ENCODE measurements at regions of chr9 and their contacts with region 1.

Region 1: GRCh38 chr9:89886281-89886700 is 281.5 kb downstream of the GADD45G start:
- DNase-seq: no peak
- ATAC-seq: peak; percentile 33 to 63 (median 59)
- H3K4me3 ChIP-seq: no peak overlapping the region
- H3K27ac ChIP-seq: peak overlapping the region; percentile 74
- H3K4me1 ChIP-seq: peaks cover 45% of the 10 kb centered on the region
- H3K27me3 ChIP-seq: no peaks in the 10 kb centered on the region
- CTCF ChIP-seq: no peak

Region 2: GRCh38 chr9:89919169-89919681 is 32.9 kb after region 1 on chr9:
- intact Hi-C with region 1: no loop called
- DNase-seq: no peak
- ATAC-seq: peak; percentile 83 to 97 (median 90)
- H3K4me3 ChIP-seq: no peak overlapping the region
- H3K27ac ChIP-seq: no peak overlapping the region
- H3K4me1 ChIP-seq: no peaks in the 10 kb centered on the region
- H3K27me3 ChIP-seq: no peaks in the 10 kb centered on the region
- CTCF ChIP-seq: peak; percentile 39

Region 3: DNA sequence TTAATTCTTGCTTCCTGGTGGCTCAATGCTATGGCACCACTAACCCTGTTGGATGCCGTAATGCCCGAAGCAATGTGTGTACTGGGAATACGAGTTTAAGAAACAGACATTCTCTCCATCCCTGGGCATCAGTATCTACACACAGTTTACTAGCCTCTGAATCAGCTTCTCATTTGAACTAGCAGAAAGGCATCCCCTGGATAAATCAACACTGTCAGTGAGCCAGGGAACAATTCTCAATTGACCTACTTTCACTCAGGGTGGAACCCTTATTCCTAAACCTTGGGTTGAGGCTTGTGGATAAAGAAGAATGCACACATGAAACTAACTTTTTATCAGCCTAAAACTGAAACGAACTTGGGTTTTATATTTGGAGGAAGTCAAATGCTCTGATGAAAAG is 49.5 kb after region 1 on chr9:
- intact Hi-C with region 1: loop called in 1 of 2 experiments (anchors 5 kb)
- DNase-seq: no peak
- ATAC-seq: no peak
- H3K4me3 ChIP-seq: no peak overlapping the region
- H3K27ac ChIP-seq: no peak overlapping the region
- H3K4me1 ChIP-seq: no peaks in the 10 kb centered on the region
- H3K27me3 ChIP-seq: no peaks in the 10 kb centered on the region
- CTCF ChIP-seq: no peak

Region 4: GRCh38 chr9:89999534-90000370 is 113.5 kb after region 1 on chr9:
- intact Hi-C with region 1: loop called in 1 of 2 experiments (anchors 5 kb)
- DNase-seq: peak; percentile 67 to 87
- ATAC-seq: peak; percentile 88 to 95 (median 92)
- H3K4me3 ChIP-seq: peak overlapping the region; percentile 17
- H3K27ac ChIP-seq: peak overlapping the region; percentile 82
- H3K4me1 ChIP-seq: peaks cover 52% of the 10 kb centered on the region
- H3K27me3 ChIP-seq: no peaks in the 10 kb centered on the region
- CTCF ChIP-seq: no peak

Measured in psoas muscle (tissue), 8 donors.